ENCODE measurements at regions of chr4 and their contacts with region 1.

Region 1: GRCh38 chr4:85979276-85979675 is 380.6 kb downstream of the MAPK10 start:
- DNase-seq: no peak
- ATAC-seq: no peak
- H3K4me3 ChIP-seq: no peak overlapping the region
- H3K4me3 Mint-ChIP-seq: no peak overlapping the region
- H3K27ac ChIP-seq: no peak overlapping the region
- H3K27ac Mint-ChIP-seq: no peak overlapping the region
- H3K4me1 ChIP-seq: no peaks in the 10 kb centered on the region
- H3K4me1 Mint-ChIP-seq: no peaks in the 10 kb centered on the region
- H3K27me3 ChIP-seq: no peaks in the 10 kb centered on the region
- H3K27me3 Mint-ChIP-seq: no peaks in the 10 kb centered on the region
- CTCF ChIP-seq: no peak

Region 2: GRCh38 chr4:85964298-85964697 is 15.0 kb before region 1 on chr4:
- CTCF ChIA-PET with region 1: no interaction called
- POLR2A ChIA-PET with region 1: no interaction called
- intact Hi-C with region 1: loop called in 1 of 2 experiments (anchors 1 kb)
- DNase-seq: no peak
- ATAC-seq: no peak
- H3K4me3 ChIP-seq: no peak overlapping the region
- H3K4me3 Mint-ChIP-seq: no peak overlapping the region
- H3K27ac ChIP-seq: no peak overlapping the region
- H3K27ac Mint-ChIP-seq: no peak overlapping the region
- H3K4me1 ChIP-seq: no peaks in the 10 kb centered on the region
- H3K4me1 Mint-ChIP-seq: no peaks in the 10 kb centered on the region
- H3K27me3 ChIP-seq: no peaks in the 10 kb centered on the region
- H3K27me3 Mint-ChIP-seq: no peaks in the 10 kb centered on the region
- CTCF ChIP-seq: no peak

Region 3: DNA sequence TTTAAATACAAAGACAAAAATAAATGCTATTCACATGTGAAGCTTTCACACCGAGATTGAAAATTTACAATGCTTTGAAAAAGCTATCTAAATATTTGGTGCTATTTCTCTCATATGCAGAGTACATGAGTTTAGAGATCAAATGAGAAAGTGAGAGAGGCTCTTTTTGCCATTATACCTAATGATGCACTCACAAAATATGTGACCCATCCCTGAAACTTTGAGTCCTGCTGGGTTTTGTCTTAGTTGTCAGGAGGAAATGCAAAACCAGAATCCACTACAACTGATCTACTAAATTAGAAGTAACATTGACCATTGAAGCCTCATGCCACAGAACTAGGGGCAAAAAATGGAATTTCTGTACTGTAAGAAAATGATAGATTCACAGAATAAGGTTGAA is 128.9 kb after region 1 on chr4:
- CTCF ChIA-PET with region 1: no interaction called
- POLR2A ChIA-PET with region 1: no interaction called
- intact Hi-C with region 1: no loop called
- DNase-seq: no peak
- ATAC-seq: no peak
- H3K4me3 ChIP-seq: no peak overlapping the region
- H3K4me3 Mint-ChIP-seq: no peak overlapping the region
- H3K27ac ChIP-seq: no peak overlapping the region
- H3K27ac Mint-ChIP-seq: no peak overlapping the region
- H3K4me1 ChIP-seq: no peaks in the 10 kb centered on the region
- H3K4me1 Mint-ChIP-seq: no peaks in the 10 kb centered on the region
- H3K27me3 ChIP-seq: no peaks in the 10 kb centered on the region
- H3K27me3 Mint-ChIP-seq: no peaks in the 10 kb centered on the region
- CTCF ChIP-seq: no peak

Measured in CD8-positive, alpha-beta T cell (primary cell).